ENCODE measurements at regions of chr1 and their contacts with region 1.

Region 1: DNA sequence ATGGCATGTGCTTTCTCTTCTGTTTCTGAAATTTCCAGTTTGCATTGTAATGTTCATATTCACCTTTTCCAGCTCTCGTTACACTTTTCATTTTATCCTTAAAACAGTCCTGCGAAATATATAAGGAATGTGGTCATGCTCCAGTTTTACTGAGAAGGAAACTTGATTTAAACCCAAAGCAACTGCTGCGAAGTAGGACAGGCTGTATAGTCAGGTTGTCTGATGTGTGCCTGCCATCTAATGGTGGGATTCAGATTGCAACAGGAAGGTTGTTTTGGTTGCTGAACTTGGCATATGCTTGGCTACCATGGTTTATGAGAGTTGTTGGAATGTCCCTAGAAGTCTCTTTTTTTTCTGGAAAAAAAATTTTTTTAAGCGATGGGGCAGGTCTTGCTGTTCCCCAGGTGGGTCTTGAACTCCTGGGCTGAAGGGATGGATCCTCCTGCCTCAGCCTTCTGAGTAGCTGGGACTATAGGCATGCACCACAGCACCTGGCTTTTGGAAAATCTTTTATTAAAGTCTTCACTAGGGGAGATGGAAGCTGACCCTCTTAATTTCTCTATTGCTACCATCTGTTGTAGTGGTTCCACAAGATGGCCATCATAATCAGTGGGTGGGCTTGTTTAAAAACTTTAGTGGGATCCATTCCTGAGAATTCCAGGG is 86.9 kb downstream of the UCK2 start:
- DNase-seq: peak; percentile 81
- ATAC-seq: peak; percentile 84
- H3K4me3 ChIP-seq: no peak overlapping the region
- H3K4me3 Mint-ChIP-seq: no peak overlapping the region
- H3K27ac ChIP-seq: no peak overlapping the region
- H3K27ac Mint-ChIP-seq: no peak overlapping the region
- H3K4me1 ChIP-seq: no peaks in the 10 kb centered on the region
- H3K4me1 Mint-ChIP-seq: peaks cover 2% of the 10 kb centered on the region
- H3K27me3 ChIP-seq: no peaks in the 10 kb centered on the region
- H3K27me3 Mint-ChIP-seq: no peaks in the 10 kb centered on the region
- CTCF ChIP-seq: peak; percentile 90

Region 2: DNA sequence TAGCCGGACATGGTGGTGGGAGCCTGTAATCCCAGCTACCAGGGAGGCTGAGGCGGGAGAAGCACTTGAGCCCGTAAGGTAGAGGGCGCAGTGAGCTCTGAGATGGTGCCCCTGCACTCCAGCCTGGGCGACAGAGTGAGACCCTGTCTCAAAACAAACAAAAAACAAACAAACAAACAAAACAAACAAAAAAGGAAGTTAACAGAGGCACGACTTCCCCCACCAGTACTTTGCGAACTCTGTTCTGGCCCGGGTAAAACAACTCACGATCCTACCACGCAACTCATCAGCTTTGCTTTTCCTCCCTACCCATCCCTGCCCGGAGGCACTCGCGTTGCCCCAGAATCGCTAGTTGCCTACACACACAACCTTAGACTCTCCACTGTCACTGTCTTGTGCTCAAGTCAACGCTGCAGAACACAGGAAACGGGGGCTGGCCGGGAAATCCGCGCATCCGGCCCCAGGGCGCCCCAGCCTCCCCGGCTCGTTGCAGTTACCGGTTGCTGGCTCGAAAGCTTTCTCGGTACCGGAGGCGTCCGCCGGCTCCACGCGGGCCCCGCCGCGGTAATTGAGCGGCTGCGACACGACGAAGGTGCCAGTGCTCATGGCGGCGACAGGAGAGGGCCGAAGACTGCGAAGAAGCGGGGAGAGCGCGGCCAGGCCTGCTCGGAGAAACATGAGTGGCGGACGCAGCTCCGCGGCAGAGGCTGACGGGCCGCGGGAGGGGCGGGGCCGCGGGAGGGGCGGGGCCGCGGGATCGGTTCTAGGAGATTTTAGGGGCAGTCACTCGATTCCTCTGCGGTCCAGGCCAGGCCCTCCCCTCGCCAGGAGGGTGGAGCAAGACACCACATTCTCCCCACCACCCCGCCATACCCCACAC is 216.1 kb before region 1 on chr1 and contains the start of gene ALDH9A1:
- CTCF ChIA-PET with region 1: interaction called, 6 read pairs
- POLR2A ChIA-PET with region 1: no interaction called
- intact Hi-C with region 1: loop called (anchors 5 kb)
- DNase-seq: peak; percentile 89
- ATAC-seq: peak; percentile 89
- H3K4me3 ChIP-seq: peak within 1 kb of the TSS; percentile 73 to 96 (median 95)
- H3K4me3 Mint-ChIP-seq: peak within 1 kb of the TSS; percentile 92
- H3K27ac ChIP-seq: peak within 1 kb of the TSS; percentile 90 to 92
- H3K27ac Mint-ChIP-seq: peak within 1 kb of the TSS; percentile 91
- H3K4me1 ChIP-seq: peaks cover 15 to 18% of the 10 kb centered on the region in 2 donors
- H3K4me1 Mint-ChIP-seq: peaks cover 25% of the 10 kb centered on the region
- H3K27me3 ChIP-seq: peaks cover 0 to 4% (median 0%) of the 10 kb centered on the region in 4 experiments
- H3K27me3 Mint-ChIP-seq: peaks cover 3% of the 10 kb centered on the region
- CTCF ChIP-seq: peak; percentile 24
- total RNA-seq, gene ALDH9A1: 37.5 and 37.9 TPM in 2 replicates

Region 3: GRCh38 chr1:165903672-165904071 is 10.6 kb before region 1 on chr1:
- CTCF ChIA-PET with region 1: interaction called, 30 read pairs
- POLR2A ChIA-PET with region 1: no interaction called
- intact Hi-C with region 1: no loop called
- DNase-seq: no peak
- ATAC-seq: no peak
- H3K4me3 ChIP-seq: no peak overlapping the region
- H3K4me3 Mint-ChIP-seq: no peak overlapping the region
- H3K27ac ChIP-seq: no peak overlapping the region
- H3K27ac Mint-ChIP-seq: no peak overlapping the region
- H3K4me1 ChIP-seq: no peaks in the 10 kb centered on the region
- H3K4me1 Mint-ChIP-seq: no peaks in the 10 kb centered on the region
- H3K27me3 ChIP-seq: no peaks in the 10 kb centered on the region
- H3K27me3 Mint-ChIP-seq: no peaks in the 10 kb centered on the region
- CTCF ChIP-seq: no peak

Region 4: DNA sequence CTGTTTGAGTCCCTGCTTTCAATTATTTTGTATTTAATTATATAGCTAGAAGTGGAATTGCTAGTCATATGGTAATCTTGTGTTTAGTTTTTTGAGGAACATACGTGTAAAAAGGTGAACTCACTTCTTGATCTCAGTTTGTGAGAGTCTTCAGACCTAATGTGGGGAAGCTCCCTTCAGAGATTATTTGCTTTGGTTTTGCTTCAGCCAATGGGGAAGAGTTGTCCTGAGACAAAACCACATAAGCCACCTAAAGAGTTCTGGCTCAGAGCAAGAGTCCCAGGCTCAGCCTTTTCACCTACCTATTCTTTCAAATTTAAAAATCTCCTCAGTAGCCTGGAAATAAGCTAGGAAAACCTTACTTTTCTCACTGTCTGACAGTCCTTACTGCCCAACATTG is 51.6 kb after region 1 on chr1:
- CTCF ChIA-PET with region 1: no interaction called
- POLR2A ChIA-PET with region 1: no interaction called
- intact Hi-C with region 1: no loop called
- DNase-seq: no peak
- ATAC-seq: no peak
- H3K4me3 ChIP-seq: no peak overlapping the region
- H3K4me3 Mint-ChIP-seq: no peak overlapping the region
- H3K27ac ChIP-seq: no peak overlapping the region
- H3K27ac Mint-ChIP-seq: no peak overlapping the region
- H3K4me1 ChIP-seq: no peaks in the 10 kb centered on the region
- H3K4me1 Mint-ChIP-seq: no peaks in the 10 kb centered on the region
- H3K27me3 ChIP-seq: no peaks in the 10 kb centered on the region
- H3K27me3 Mint-ChIP-seq: peaks cover 11% of the 10 kb centered on the region
- CTCF ChIP-seq: no peak

Measured in B cell (primary cell).